Esophagus squamous epithelium (tissue), 5 donors: ENCODE measurements at regions of chr4 and their contacts with region 1.

Region 1: DNA sequence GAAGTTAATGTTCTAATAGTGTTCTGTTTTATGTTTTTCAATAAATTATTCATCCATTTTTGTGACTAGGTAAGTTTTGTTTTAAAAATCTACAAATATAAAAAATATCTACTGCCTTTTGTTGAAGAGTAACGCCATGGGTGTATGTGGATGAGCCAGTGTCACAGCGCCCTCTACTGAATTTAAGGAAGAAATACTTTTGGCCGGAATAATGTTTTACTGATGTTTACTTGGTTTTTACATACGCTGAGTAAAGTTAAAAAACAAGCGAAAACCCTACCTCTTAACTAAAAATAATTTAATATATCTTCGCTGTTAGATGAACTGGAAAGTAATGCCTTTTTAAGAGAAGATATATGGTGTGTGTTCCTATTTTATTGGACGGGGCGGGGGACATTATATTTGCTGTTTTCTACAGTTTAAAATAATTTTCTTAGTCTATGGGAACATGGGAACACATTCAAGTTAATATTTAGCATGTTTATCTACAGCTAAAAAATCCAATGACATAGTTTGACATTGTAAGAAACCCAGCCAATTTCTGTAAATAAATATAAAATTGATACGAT is 86.1 kb downstream of the CPE start:
- DNase-seq: no peak
- H3K4me3 ChIP-seq: no peak overlapping the region
- H3K27ac ChIP-seq: no peak overlapping the region
- H3K4me1 ChIP-seq: peaks cover 0 to 5% (median 0%) of the 10 kb centered on the region in 3 donors
- H3K27me3 ChIP-seq: no peaks in the 10 kb centered on the region
- CTCF ChIP-seq: peak; percentile 62 to 86 (median 76)
- POLR2A ChIP-seq: no peak

Region 2: DNA sequence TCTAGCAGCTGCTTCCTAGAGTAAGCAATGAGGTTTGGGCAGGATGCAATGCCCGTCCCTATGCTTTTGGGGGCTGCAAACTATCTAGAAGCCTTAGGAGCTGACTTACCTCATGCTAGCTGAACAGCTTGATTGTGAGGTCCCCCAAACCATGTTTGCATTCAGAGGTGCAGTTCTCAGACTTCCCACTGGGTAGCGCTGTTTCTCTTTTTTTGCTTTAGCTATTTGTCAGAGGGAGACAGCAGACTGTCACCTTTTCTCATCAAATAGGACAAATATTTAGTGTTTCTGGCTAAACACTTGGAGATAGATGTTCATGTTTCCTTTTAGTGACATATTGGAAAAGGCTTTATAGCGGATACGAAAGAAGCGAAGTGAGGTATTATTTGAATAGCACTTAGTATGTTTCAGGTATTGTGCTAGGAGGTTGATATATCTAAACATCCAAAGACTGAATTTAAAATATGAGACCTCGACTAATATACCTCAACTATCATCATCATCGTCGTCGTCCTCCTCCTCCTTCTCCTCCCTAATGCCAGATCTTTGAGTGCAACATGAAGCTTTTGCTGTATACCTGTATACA is 333.6 kb before region 1 on chr4:
- intact Hi-C with region 1: loop called (anchors 5 kb)
- DNase-seq: no peak
- H3K4me3 ChIP-seq: no peak overlapping the region
- H3K27ac ChIP-seq: no peak overlapping the region
- H3K4me1 ChIP-seq: no peaks in the 10 kb centered on the region
- H3K27me3 ChIP-seq: peaks cover 0 to 4% (median 0%) of the 10 kb centered on the region in 4 donors
- CTCF ChIP-seq: peak; percentile 76 to 96 (median 90)
- POLR2A ChIP-seq: no peak

Region 3: GRCh38 chr4:165364452-165365080 is 100.3 kb before region 1 on chr4:
- intact Hi-C with region 1: loop called (anchors 10 kb)
- DNase-seq: no peak
- H3K4me3 ChIP-seq: no peak overlapping the region
- H3K27ac ChIP-seq: no peak overlapping the region
- H3K4me1 ChIP-seq: no peaks in the 10 kb centered on the region
- H3K27me3 ChIP-seq: peaks cover 0 to 4% (median 0%) of the 10 kb centered on the region in 4 donors
- CTCF ChIP-seq: no peak
- POLR2A ChIP-seq: no peak